Activated CD8-positive, alpha-beta T cell treated with anti-CD3 and anti-CD28 coated beads for 36 hours (primary cell): ENCODE measurements at regions of chr17 and their contacts with region 1.

Region 1: DNA sequence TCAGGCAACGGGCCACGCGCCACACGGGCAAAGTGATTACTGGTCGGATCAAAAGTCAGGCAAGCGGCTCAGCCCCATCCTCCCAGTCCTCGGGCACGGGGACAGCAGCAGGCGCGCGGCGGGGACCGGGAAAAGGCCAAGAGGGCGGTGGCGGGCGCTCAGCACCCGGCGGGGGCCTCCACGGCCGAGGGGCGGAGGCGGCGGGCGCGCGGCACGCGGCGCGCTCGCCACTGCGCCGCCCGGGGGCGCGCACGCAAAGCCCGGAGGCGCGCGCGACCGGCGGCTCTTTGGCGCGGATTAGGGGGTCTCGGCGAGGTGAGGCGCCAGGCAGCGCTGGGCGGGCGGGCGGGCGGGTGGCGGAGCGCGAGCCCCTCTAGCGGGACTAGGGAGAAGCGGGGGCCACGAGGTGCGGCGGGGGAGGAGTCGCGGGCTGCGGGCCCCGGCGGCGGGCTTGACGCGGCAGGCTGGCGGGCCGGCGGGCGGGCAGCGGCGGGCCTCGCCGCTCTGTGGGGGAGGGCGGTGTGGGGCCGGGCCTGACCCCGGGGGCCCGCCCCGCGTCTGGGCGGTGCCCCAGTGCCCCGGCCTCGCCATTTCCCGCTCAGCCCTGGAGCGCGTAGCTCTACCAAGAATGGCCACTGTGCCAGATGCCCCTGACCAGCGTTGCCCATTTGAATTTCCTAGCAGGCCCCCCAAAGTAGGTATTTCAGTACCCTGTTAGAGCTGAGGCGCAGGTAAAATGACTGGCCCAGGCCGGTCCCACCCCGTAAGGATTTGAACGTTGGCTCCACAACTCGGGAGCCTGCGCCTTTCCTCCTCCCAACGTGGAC is at the starts of genes ACACA and TADA2A:
- DNase-seq: peak; percentile 79
- ATAC-seq: peak; percentile 97
- H3K4me3 Mint-ChIP-seq: peak within 1 kb of the TSS; percentile 99
- H3K27ac Mint-ChIP-seq: peak within 1 kb of the TSS; percentile 97
- H3K4me1 Mint-ChIP-seq: peaks cover 50% of the 10 kb centered on the region
- H3K27me3 Mint-ChIP-seq: no peaks in the 10 kb centered on the region
- CTCF ChIP-seq: no peak
- total RNA-seq, gene ACACA: 66.0 to 68.2 TPM
- total RNA-seq, gene TADA2A: 31.5 to 36.5 TPM

Region 2: DNA sequence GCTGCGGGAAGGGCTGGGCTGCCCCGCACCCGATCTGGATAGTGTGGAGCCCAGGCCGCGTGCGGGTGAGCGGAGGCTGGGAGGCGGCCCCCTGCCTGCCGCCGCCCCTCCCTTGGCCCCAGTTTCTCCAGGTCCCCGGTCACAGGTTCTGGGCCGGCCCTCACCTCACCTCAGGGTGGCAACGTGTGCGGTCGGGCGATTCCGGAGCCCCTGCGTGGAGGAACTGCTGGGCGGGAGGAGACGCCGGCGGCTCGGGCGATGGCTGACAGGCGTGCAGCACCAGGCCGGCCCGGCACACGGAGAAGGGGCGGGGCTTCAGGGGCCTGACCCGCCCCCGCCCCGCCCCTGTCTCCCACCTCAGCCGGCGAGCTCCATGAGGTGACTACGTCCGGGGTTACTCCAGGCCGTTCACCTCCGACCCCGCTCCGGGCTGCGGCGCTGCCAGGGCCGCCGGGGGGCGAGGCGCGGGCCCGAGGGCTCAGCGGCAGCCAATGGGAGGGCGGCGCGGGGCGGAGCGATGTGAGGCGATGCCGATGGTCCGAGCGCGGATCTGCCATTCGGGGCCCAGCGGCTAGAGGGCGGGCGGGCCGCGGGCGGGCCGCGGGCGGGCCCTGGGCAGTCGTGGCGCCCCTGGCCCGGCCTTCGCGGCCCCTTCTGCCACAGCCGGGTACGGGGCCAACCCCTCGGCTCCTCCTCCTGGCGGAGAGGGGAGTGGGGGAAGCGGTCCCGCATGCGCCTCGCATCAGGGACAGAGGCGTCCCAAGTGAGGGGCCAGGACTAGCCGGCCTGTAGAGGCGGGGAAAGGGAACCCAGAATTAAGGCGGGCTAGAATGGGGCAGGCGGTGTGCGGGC is 47.8 kb before region 1 on chr17:
- CTCF ChIA-PET with region 1: interaction called, 4 read pairs
- POLR2A ChIA-PET with region 1: interaction called, 5 read pairs
- intact Hi-C with region 1: loop called (anchors 5 kb)
- DNase-seq: peak; percentile 97
- ATAC-seq: peak; percentile 98
- H3K4me3 Mint-ChIP-seq: peak overlapping the region; percentile 96
- H3K27ac Mint-ChIP-seq: peak overlapping the region; percentile 91
- H3K4me1 Mint-ChIP-seq: peaks cover 24% of the 10 kb centered on the region
- H3K27me3 Mint-ChIP-seq: no peaks in the 10 kb centered on the region
- CTCF ChIP-seq: peak; percentile 41

Region 3: GRCh38 chr17:37430051-37430627 is 23.3 kb after region 1 on chr17:
- CTCF ChIA-PET with region 1: interaction called, 6 read pairs
- POLR2A ChIA-PET with region 1: interaction called, 14 read pairs
- intact Hi-C with region 1: no loop called
- DNase-seq: peak; percentile 12
- ATAC-seq: peak; percentile 91
- H3K4me3 Mint-ChIP-seq: peak overlapping the region; percentile 52
- H3K27ac Mint-ChIP-seq: peak overlapping the region; percentile 97
- H3K4me1 Mint-ChIP-seq: peaks cover 34% of the 10 kb centered on the region
- H3K27me3 Mint-ChIP-seq: no peaks in the 10 kb centered on the region
- CTCF ChIP-seq: no peak

Region 4: GRCh38 chr17:37440424-37440823 is 33.6 kb after region 1 on chr17:
- CTCF ChIA-PET with region 1: no interaction called
- POLR2A ChIA-PET with region 1: no interaction called
- intact Hi-C with region 1: no loop called
- DNase-seq: no peak
- ATAC-seq: no peak
- H3K4me3 Mint-ChIP-seq: no peak overlapping the region
- H3K27ac Mint-ChIP-seq: peak overlapping the region; percentile 25
- H3K4me1 Mint-ChIP-seq: no peaks in the 10 kb centered on the region
- H3K27me3 Mint-ChIP-seq: no peaks in the 10 kb centered on the region
- CTCF ChIP-seq: no peak